GM10248 (cell line): ENCODE measurements at regions of chr1 and their contacts with region 1.

Region 1: GRCh38 chr1:246709835-246710234 is 14.4 kb upstream of the SCCPDH start:
- DNase-seq: no peak
- CTCF ChIP-seq: no peak

Region 2: DNA sequence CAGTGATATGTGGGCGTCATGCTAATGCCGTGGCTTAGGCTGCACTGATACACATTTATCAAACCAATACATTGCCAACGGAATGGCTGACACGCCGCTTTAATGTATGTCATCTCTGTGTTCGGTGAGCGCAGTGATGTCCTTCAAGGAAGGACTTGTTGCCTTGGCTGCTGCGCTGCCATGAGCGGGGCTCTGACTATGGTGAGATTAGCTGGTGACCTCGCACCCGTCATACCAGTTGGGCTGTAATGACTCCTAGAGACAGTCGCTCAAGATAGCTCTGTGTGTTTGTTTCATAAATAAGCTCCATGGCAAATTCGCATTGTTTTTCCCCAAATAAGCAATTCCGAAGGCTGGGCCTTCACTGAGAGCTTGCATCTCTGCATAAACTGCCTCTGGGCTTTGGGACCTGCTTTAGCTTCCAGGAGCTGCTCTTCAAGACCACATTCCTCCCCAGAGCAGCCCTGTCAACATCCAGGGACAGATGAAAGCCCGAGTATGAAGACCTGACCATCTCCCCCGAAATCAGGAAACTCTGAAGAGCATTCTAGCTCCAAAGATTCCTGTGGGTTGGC is 26.4 kb before region 1 on chr1:
- CTCF ChIA-PET with region 1: no interaction called
- POLR2A ChIA-PET with region 1: no interaction called
- DNase-seq: no peak
- CTCF ChIP-seq: no peak

Region 3: GRCh38 chr1:246695136-246695535 is 14.7 kb before region 1 on chr1:
- CTCF ChIA-PET with region 1: interaction called, 27 read pairs
- POLR2A ChIA-PET with region 1: no interaction called
- DNase-seq: no peak
- CTCF ChIP-seq: no peak